ENCODE measurements at regions of chr3 and their contacts with region 1.

Region 1: GRCh38 chr3:119352849-119353502 is 58.8 kb downstream of the ARHGAP31 start:
- DNase-seq: peak in 7 of 9 donors; percentile 53 to 78 (median 69)
- ATAC-seq: peak; percentile 77
- H3K4me3 ChIP-seq: no peak overlapping the region
- H3K4me3 Mint-ChIP-seq: peak overlapping the region in 8 of 10 donors; percentile 2 to 67 (median 54)
- H3K27ac ChIP-seq: no peak overlapping the region
- H3K27ac Mint-ChIP-seq: peak overlapping the region in 8 of 9 donors; percentile 13 to 81 (median 42)
- H3K4me1 ChIP-seq: peaks cover 0 to 35% of the 10 kb centered on the region in 2 donors
- H3K4me1 Mint-ChIP-seq: peaks cover 26 to 47% (median 36%) of the 10 kb centered on the region in 7 donors
- H3K27me3 ChIP-seq: no peaks in the 10 kb centered on the region
- H3K27me3 Mint-ChIP-seq: peaks cover 0 to 20% (median 0%) of the 10 kb centered on the region in 5 donors

Region 2: GRCh38 chr3:119063471-119063870 is 289.5 kb before region 1 on chr3:
- CTCF ChIA-PET with region 1: no interaction called
- POLR2A ChIA-PET with region 1: no interaction called
- intact Hi-C with region 1: no loop called
- DNase-seq: no peak
- ATAC-seq: no peak
- H3K4me3 ChIP-seq: no peak overlapping the region
- H3K4me3 Mint-ChIP-seq: no peak overlapping the region
- H3K27ac ChIP-seq: no peak overlapping the region
- H3K27ac Mint-ChIP-seq: no peak overlapping the region
- H3K4me1 ChIP-seq: no peaks in the 10 kb centered on the region
- H3K4me1 Mint-ChIP-seq: no peaks in the 10 kb centered on the region
- H3K27me3 ChIP-seq: no peaks in the 10 kb centered on the region
- H3K27me3 Mint-ChIP-seq: peaks cover 0 to 15% (median 13%) of the 10 kb centered on the region in 5 donors

Region 3: DNA sequence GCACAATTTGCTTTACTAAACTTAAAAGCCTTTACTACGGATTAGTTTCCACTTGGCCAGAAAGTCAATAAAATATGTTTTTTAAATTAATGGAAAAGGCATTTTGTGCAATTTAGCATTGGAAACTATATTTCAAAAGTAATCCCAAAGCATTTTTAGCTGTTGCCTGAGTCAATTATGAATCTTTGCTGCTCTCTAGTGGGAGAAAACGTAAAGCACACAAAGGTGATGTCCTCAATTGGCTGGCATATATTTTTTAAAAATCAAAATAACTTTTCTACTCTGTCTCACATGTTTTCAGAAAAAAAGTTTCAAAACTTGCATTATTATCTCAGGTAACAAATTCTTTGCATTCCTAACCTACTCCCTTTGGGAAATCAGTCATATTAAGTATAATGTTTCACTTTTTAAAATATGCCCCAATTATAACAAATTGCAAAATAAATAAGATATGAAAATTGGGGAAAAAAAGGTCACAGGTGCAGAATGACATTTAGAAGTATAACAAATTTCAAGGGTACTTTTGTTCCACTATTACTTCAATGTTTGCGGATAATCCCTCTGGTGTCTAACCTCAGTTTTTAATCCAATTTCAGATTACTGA is 254.3 kb before region 1 on chr3:
- CTCF ChIA-PET with region 1: no interaction called
- POLR2A ChIA-PET with region 1: no interaction called
- intact Hi-C with region 1: loop called in 1 of 2 experiments (anchors 2 kb)
- DNase-seq: peak in 7 of 9 donors; percentile 24 to 65 (median 54)
- ATAC-seq: peak; percentile 50
- H3K4me3 ChIP-seq: no peak overlapping the region
- H3K4me3 Mint-ChIP-seq: no peak overlapping the region
- H3K27ac ChIP-seq: no peak overlapping the region
- H3K27ac Mint-ChIP-seq: no peak overlapping the region
- H3K4me1 ChIP-seq: no peaks in the 10 kb centered on the region
- H3K4me1 Mint-ChIP-seq: peaks cover 0 to 1% (median 0%) of the 10 kb centered on the region in 7 donors
- H3K27me3 ChIP-seq: no peaks in the 10 kb centered on the region
- H3K27me3 Mint-ChIP-seq: peaks cover 0 to 4% (median 0%) of the 10 kb centered on the region in 5 donors

Region 4: GRCh38 chr3:119279101-119279554 is 73.8 kb before region 1 on chr3:
- CTCF ChIA-PET with region 1: interaction called, 69 read pairs
- POLR2A ChIA-PET with region 1: interaction called, 5 read pairs
- intact Hi-C with region 1: loop called (anchors 1 kb)
- DNase-seq: no peak
- ATAC-seq: no peak
- H3K4me3 ChIP-seq: no peak overlapping the region
- H3K4me3 Mint-ChIP-seq: no peak overlapping the region
- H3K27ac ChIP-seq: no peak overlapping the region
- H3K27ac Mint-ChIP-seq: no peak overlapping the region
- H3K4me1 ChIP-seq: peaks cover 0 to 7% of the 10 kb centered on the region in 2 donors
- H3K4me1 Mint-ChIP-seq: peaks cover 0 to 23% (median 11%) of the 10 kb centered on the region in 7 donors
- H3K27me3 ChIP-seq: no peaks in the 10 kb centered on the region
- H3K27me3 Mint-ChIP-seq: no peaks in the 10 kb centered on the region

Region 5: GRCh38 chr3:119322835-119323722 is 29.9 kb before region 1 on chr3:
- CTCF ChIA-PET with region 1: interaction called, 6 read pairs
- POLR2A ChIA-PET with region 1: interaction called, 7 read pairs
- intact Hi-C with region 1: loop called (anchors 1 to 2 kb)
- DNase-seq: peak; percentile 77 to 96 (median 81)
- ATAC-seq: peak; percentile 90
- H3K4me3 ChIP-seq: peak overlapping the region; percentile 65
- H3K4me3 Mint-ChIP-seq: peak overlapping the region; percentile 84 to 96 (median 90)
- H3K27ac ChIP-seq: peak overlapping the region; percentile 81
- H3K27ac Mint-ChIP-seq: peak overlapping the region; percentile 90 to 99 (median 95)
- H3K4me1 ChIP-seq: peaks cover 10 to 14% of the 10 kb centered on the region in 2 donors
- H3K4me1 Mint-ChIP-seq: peaks cover 12 to 30% (median 21%) of the 10 kb centered on the region in 7 donors
- H3K27me3 ChIP-seq: no peaks in the 10 kb centered on the region
- H3K27me3 Mint-ChIP-seq: peaks cover 0 to 57% (median 0%) of the 10 kb centered on the region in 5 donors

Measured in naive thymus-derived CD4-positive, alpha-beta T cell (primary cell).